ENCODE measurements at regions of chr6 and their contacts with region 1.

Region 1: GRCh38 chr6:144095331-144096002 is at the start of gene SF3B5:
- DNase-seq: peak; percentile 99
- ATAC-seq: peak; percentile 96
- H3K4me3 Mint-ChIP-seq: peak within 1 kb of the TSS; percentile 98
- H3K27ac Mint-ChIP-seq: peak within 1 kb of the TSS; percentile 97
- H3K4me1 Mint-ChIP-seq: peaks cover 34% of the 10 kb centered on the region
- H3K27me3 Mint-ChIP-seq: no peaks in the 10 kb centered on the region
- total RNA-seq, gene SF3B5: 151 to 176 TPM

Region 2: GRCh38 chr6:144063744-144064401 is 31.6 kb before region 1 on chr6:
- CTCF ChIA-PET with region 1: interaction called, 13 read pairs
- DNase-seq: peak; percentile 95
- ATAC-seq: peak; percentile 95
- H3K4me3 Mint-ChIP-seq: peak overlapping the region; percentile 86
- H3K27ac Mint-ChIP-seq: peak overlapping the region; percentile 89
- H3K4me1 Mint-ChIP-seq: peaks cover 45% of the 10 kb centered on the region
- H3K27me3 Mint-ChIP-seq: peaks cover 2% of the 10 kb centered on the region